Activated CD4-positive, alpha-beta T cell treated with anti-CD3 and anti-CD28 coated beads, Interleukin-2, amount 10 ng/mL, durations not matched to agents 24 days and 14 days (primary cell): ENCODE measurements at regions of chr12 and their contacts with region 1.

Region 1: DNA sequence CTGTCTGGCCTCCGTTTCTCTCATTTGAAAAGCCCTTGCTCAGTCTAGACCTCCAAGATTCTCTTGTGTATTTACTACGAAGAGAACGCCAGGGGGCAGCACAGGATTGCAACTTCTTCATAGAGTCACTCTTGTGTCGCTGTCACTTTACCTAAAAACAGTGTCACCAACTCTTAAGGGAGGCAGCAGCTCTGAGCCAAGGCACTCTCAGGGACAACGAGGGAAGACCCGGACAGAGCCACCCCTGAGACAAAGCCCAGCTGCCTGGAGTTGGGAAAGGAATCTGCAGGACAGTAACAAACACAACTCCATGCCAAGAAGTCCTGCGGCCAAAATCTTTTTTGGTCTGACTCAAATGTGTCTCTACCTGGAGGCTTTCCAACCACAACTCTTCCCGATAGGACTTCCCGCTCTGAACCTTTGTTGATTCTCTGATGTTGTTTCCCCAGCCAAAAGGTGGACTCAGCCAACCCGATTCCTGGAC is 9.6 kb upstream of the RPAP3 start:
- DNase-seq: peak; percentile 93
- H3K4me3 Mint-ChIP-seq: no peak overlapping the region
- H3K27ac Mint-ChIP-seq: no peak overlapping the region
- H3K4me1 Mint-ChIP-seq: peaks cover 25% of the 10 kb centered on the region
- H3K27me3 Mint-ChIP-seq: no peaks in the 10 kb centered on the region

Region 2: GRCh38 chr12:47742253-47742825 is 26.9 kb after region 1 on chr12:
- intact Hi-C with region 1: loop called (anchors 1 kb)
- DNase-seq: peak; percentile 93
- H3K4me3 Mint-ChIP-seq: no peak overlapping the region
- H3K27ac Mint-ChIP-seq: no peak overlapping the region
- H3K4me1 Mint-ChIP-seq: peaks cover 10% of the 10 kb centered on the region
- H3K27me3 Mint-ChIP-seq: peaks cover 5% of the 10 kb centered on the region

Region 3: GRCh38 chr12:47779301-47779942 is 64.0 kb after region 1 on chr12:
- intact Hi-C with region 1: loop called (anchors 1 kb)
- DNase-seq: peak; percentile 97
- H3K4me3 Mint-ChIP-seq: no peak overlapping the region
- H3K27ac Mint-ChIP-seq: peak overlapping the region; percentile 64
- H3K4me1 Mint-ChIP-seq: peaks cover 43% of the 10 kb centered on the region
- H3K27me3 Mint-ChIP-seq: no peaks in the 10 kb centered on the region

Region 4: DNA sequence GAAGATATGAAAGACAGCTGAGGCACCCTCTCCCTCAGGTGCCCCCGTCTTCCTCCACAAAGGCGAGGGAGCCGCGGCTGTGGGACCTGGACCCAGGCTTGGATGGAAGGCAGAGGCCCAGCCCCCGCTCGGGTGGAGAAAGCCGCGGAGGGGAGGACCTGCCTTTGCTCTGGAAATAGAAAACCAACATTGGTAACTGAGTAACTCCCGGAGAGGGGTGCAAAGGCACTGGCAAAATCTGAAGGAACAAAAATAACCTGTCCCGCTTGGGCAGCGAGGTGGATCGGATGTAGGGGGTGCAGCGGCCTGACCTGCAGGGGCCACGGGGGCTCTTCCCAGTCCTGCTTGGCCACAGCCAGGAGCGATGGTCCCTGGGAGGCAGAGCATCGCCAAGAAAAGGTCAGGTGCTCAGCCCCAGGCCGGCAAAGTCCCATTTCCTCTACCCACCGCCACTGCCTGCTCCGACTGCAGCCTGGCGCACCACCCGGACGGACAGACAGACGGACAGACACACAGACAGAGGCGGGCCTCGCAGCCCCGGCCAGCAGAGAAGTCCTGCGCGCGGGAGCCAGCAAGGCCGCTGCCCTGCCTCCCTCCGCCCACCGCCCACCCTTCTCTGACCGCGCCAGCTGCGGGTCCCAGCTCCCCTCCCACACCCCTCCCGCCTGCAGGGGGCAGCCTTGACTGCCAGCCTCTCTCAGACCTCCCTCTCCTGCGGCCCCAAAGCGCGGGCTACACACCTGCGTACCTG is 226.6 kb after region 1 on chr12:
- intact Hi-C with region 1: no loop called
- DNase-seq: peak; percentile 80
- H3K4me3 Mint-ChIP-seq: no peak overlapping the region
- H3K27ac Mint-ChIP-seq: no peak overlapping the region
- H3K4me1 Mint-ChIP-seq: peaks cover 3% of the 10 kb centered on the region
- H3K27me3 Mint-ChIP-seq: peaks cover 23% of the 10 kb centered on the region

Region 5: DNA sequence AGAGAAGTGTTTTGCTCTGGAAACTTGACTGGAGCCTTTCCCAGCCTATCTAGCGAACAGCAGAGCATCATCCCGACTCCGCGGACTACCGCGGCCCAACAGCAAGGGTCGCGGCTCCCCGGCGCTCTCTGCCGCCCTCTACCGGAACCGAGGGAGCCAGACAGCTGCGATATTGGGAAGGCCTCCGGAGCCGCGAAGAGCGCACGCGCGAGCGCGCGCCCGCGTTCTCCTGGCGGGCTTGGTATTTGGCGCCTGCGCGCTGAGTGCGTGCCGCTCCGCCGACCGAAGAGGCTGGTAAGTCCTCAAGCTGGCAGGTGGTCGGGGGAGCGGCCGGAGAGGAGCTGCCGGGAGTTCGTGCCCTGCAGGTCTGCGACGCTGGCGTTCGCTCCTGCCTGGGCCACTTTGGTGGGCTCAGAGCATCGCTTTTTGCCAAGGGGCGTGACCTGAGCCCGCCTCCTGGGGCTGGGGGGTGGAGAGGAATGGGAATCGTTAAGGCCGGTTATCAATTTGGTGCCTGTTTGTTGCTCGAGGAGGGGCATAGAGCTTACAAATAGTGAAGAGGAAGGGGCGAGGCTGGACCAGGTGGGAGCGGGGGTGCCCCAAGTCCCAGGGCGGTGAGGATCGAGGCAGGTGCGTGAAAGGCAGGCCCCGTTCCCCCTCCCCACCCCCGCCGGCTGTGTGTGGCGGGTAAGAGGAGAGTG is 248.1 kb after region 1 on chr12 and contains the start of gene TMEM106C:
- intact Hi-C with region 1: loop called (anchors 10 kb)
- DNase-seq: peak; percentile 98
- H3K4me3 Mint-ChIP-seq: peak within 1 kb of the TSS; percentile 100
- H3K27ac Mint-ChIP-seq: peak within 1 kb of the TSS; percentile 90
- H3K4me1 Mint-ChIP-seq: peaks cover 33% of the 10 kb centered on the region
- H3K27me3 Mint-ChIP-seq: peaks cover 29% of the 10 kb centered on the region
- total RNA-seq, gene TMEM106C: 155 and 162 TPM in 2 replicates

Region 6: DNA sequence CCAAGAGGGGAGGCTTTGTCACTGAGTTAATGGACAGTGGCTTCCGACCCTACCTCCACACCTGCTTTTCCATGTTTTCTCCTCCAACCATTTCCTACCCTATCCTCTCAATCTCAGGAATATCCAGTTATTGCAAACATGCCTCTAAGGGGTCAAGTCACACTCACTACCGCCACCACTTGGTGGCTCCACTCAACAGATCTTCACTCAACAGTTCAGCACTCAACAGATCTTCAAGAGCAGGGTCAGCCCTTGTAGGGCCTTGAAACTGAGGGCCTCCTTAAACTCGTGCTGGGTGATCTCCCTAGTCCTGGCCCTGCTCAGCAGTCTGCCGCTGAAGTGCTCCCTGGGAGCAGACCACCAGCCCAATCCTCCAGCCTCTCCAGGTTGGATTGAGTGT is 621.1 kb after region 1 on chr12:
- intact Hi-C with region 1: no loop called
- DNase-seq: no peak
- H3K4me3 Mint-ChIP-seq: no peak overlapping the region
- H3K27ac Mint-ChIP-seq: no peak overlapping the region
- H3K4me1 Mint-ChIP-seq: peaks cover under 1% of the 10 kb centered on the region
- H3K27me3 Mint-ChIP-seq: no peaks in the 10 kb centered on the region

Region 7: GRCh38 chr12:48618541-48618940 is 903.1 kb after region 1 on chr12:
- intact Hi-C with region 1: loop called (anchors 5 kb)
- DNase-seq: peak; percentile 93
- H3K4me3 Mint-ChIP-seq: no peak overlapping the region
- H3K27ac Mint-ChIP-seq: no peak overlapping the region
- H3K4me1 Mint-ChIP-seq: peaks cover 3% of the 10 kb centered on the region
- H3K27me3 Mint-ChIP-seq: peaks cover 26% of the 10 kb centered on the region